Prostate gland (tissue), 2 donors: ENCODE measurements at regions of chr9 and their contacts with region 1.

Region 1: GRCh38 chr9:15873569-15874177 is 320.8 kb downstream of the CCDC171 start:
- DNase-seq: no peak
- H3K4me3 ChIP-seq: no peak overlapping the region
- H3K27ac ChIP-seq: no peak overlapping the region
- H3K4me1 ChIP-seq: no peaks in the 10 kb centered on the region
- H3K27me3 ChIP-seq: no peaks in the 10 kb centered on the region
- CTCF ChIP-seq: peak; percentile 25 to 72 (median 66)
- POLR2A ChIP-seq: no peak

Region 2: DNA sequence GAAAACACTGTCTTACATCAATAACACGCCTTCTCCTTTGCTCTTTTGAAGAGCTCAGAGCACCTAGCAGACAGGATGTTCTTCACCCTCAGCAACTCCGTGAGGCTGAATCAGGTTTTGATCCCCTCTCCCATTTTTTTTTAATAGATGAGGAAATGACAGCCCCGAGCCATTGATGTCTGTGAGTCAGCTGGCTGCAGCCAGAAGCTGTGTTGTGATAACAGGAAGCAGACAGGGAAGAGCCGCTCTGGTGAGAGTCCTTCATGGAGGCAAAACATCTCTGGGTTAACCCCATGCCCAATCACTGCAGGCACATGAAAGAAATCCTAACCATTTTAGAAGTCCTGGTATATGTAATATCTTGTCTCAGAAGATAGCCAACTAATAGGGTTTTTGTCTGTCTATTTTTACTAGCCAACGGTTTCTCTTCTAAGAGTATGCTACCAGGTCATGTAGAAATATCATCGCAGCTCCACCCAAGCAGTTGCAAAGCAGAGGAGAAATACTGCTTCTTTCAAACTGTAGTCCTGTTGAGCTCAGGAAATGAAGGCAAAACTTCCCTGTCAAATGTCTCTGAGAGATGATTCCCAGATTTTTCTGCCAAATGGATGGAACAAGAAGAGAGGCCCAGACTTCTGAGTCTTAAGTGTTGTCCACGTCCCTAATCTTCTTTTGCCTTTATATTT is 248.1 kb after region 1 on chr9:
- intact Hi-C with region 1: loop called (anchors 10 kb)
- DNase-seq: no peak
- H3K4me3 ChIP-seq: no peak overlapping the region
- H3K27ac ChIP-seq: no peak overlapping the region
- H3K4me1 ChIP-seq: no peaks in the 10 kb centered on the region
- H3K27me3 ChIP-seq: no peaks in the 10 kb centered on the region
- CTCF ChIP-seq: no peak
- POLR2A ChIP-seq: no peak